ENCODE measurements at regions of chr2 and their contacts with region 1.

Region 1: DNA sequence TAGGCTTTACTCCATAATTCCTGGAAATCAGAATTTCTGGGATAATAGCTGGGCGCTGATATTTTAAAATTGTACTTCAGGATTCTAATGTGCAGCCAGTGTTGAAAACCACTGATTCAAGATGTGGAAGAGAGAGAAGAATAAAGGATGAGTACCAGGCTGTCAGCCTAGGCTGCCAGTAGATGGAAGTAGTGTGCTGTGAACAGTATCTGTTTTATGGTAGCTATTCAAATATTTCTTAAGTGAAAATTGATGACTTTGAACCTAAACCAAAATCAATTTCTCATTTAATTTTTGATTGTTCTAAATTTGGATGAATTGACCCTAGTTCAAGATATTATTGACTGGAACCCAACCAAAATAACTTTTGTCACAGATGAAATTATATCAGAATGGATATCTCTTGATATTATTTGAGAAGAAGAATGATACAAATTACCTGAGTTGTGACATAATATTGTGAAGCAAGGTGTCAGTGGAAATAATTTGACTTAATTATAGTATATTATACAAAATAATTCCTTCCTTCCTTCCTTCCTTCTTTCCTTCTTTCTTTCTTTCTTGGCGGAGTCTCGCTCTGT is 88.1 kb downstream of the COMMD1 start:
- DNase-seq: peak; percentile 55
- ATAC-seq: peak; percentile 76
- H3K4me3 ChIP-seq: no peak overlapping the region
- H3K27ac ChIP-seq: no peak overlapping the region
- H3K4me1 ChIP-seq: peaks cover 26% of the 10 kb centered on the region
- H3K27me3 ChIP-seq: no peaks in the 10 kb centered on the region
- CTCF ChIP-seq: peak; percentile 74 to 87 (median 84)
- EP300 ChIP-seq: no peak
- POLR2A ChIP-seq: no peak
- RAD21 ChIP-seq: peak; percentile 91

Region 2: DNA sequence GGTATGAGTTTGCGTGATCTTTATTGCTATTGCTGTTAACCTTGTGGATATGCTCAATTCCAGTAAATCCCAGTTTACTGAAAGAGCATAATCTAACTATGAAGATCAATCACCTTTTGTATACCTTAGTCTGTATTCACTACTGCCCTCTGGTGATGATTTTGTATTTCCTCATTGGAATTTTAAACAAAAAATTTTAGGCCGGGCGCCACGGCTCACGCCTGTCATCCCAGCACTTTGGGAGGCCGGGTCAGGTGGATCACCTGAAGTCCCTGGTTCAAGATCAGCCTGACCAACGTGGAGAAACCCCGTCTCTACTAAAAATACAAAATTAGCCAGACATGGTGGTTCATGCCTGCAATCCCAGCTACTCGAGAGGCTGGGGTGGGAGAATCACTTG is 82.9 kb before region 1 on chr2:
- CTCF ChIA-PET with region 1: no interaction called
- POLR2A ChIA-PET with region 1: no interaction called
- RAD21 ChIA-PET with region 1: interaction called, 4 read pairs
- SMC1A ChIA-PET with region 1: interaction called, 3 read pairs
- in situ Hi-C with region 1: no loop called
- intact Hi-C with region 1: loop called (anchors 5 kb)
- DNase-seq: no peak
- ATAC-seq: no peak
- H3K4me3 ChIP-seq: no peak overlapping the region
- H3K27ac ChIP-seq: no peak overlapping the region
- H3K4me1 ChIP-seq: no peaks in the 10 kb centered on the region
- H3K27me3 ChIP-seq: no peaks in the 10 kb centered on the region
- CTCF ChIP-seq: peak in 2 of 3 experiments; percentile 12 to 19; a peak in 2 of 6 replicates
- EP300 ChIP-seq: no peak
- POLR2A ChIP-seq: no peak
- RAD21 ChIP-seq: no peak

Region 3: DNA sequence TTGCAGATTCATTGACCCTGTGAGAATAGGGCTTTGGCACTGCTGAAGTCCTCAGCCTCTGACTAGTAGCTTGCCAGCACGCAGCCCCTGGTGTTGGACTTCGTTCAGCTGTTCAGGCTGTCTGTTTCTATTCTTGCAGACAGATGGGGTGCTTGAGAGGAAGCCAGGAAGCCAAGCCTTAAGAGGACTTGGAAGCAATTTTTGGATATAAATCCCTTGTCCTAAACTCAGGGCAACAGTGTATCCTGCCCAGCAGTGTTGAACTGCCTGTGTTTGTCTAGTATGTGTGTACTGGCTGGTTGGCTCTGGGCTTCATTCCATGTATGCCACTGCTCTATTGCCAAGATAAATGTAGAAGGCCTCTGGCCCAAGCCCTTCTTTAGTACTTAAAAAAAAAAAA is 20.6 kb after region 1 on chr2:
- CTCF ChIA-PET with region 1: interaction called, 40 read pairs
- POLR2A ChIA-PET with region 1: no interaction called
- RAD21 ChIA-PET with region 1: interaction called, 16 read pairs
- SMC1A ChIA-PET with region 1: interaction called, 38 read pairs
- in situ Hi-C with region 1: no loop called
- intact Hi-C with region 1: no loop called
- DNase-seq: no peak
- ATAC-seq: peak; percentile 22; the same call in 1 of the 3 replicates
- H3K4me3 ChIP-seq: no peak overlapping the region
- H3K27ac ChIP-seq: no peak overlapping the region
- H3K4me1 ChIP-seq: peaks cover 8% of the 10 kb centered on the region; the same call in 1 of the 2 replicates
- H3K27me3 ChIP-seq: no peaks in the 10 kb centered on the region
- CTCF ChIP-seq: no peak
- EP300 ChIP-seq: no peak
- POLR2A ChIP-seq: no peak
- RAD21 ChIP-seq: no peak

Region 4: DNA sequence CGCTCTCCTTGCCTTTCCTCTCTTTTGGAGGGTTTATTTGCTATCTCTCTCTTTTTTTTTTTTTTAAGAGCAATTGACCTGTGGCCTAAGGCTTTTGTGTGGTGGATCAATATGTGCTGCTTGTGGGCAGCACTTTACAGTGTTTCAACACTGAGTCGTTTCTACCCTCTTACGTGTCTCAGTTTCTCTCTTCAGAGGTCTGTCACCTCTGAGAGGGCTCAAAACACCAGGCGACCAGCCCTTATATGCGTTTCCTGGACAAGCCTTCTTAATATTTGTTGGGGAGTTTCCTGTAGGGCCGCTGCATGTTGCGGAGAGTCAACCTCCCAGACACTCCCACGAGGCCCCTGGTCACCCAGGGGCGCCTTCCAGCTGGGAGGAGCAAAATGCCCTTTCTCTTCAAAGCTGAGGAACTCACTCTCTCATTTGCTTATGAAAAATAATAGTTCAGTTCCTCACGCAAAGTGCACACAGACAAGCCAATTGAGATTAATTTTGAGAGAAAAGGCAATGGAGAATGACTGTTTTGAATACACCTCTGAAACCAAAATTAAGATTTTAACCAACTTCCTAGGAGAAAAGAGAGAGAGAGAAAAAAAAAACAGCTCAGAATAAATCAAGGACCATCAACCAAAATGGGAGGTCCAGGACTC is 106.1 kb after region 1 on chr2:
- CTCF ChIA-PET with region 1: interaction called, 23 read pairs
- POLR2A ChIA-PET with region 1: interaction called, 4 read pairs
- RAD21 ChIA-PET with region 1: interaction called, 38 read pairs
- SMC1A ChIA-PET with region 1: interaction called, 50 read pairs
- in situ Hi-C with region 1: no loop called
- intact Hi-C with region 1: no loop called
- DNase-seq: peak; percentile 80
- ATAC-seq: peak; percentile 96
- H3K4me3 ChIP-seq: peak overlapping the region; percentile 53
- H3K27ac ChIP-seq: peak overlapping the region; percentile 95
- H3K4me1 ChIP-seq: peaks cover 43% of the 10 kb centered on the region
- H3K27me3 ChIP-seq: no peaks in the 10 kb centered on the region
- CTCF ChIP-seq: no peak
- EP300 ChIP-seq: peak; percentile 13 to 16; a peak in 1 of 4 replicates
- POLR2A ChIP-seq: no peak
- RAD21 ChIP-seq: no peak

Region 5: GRCh38 chr2:62195421-62196277 is 202.1 kb after region 1 on chr2 and contains the start of gene B3GNT2:
- CTCF ChIA-PET with region 1: interaction called, 9 read pairs
- POLR2A ChIA-PET with region 1: interaction called, 5 read pairs
- RAD21 ChIA-PET with region 1: interaction called, 63 read pairs
- SMC1A ChIA-PET with region 1: interaction called, 28 read pairs
- in situ Hi-C with region 1: loop called (anchors 10 kb)
- intact Hi-C with region 1: loop called (anchors 2 kb)
- DNase-seq: no peak
- ATAC-seq: peak; percentile 63
- H3K4me3 ChIP-seq: peak within 1 kb of the TSS; percentile 86
- H3K27ac ChIP-seq: peak within 1 kb of the TSS; percentile 87
- H3K4me1 ChIP-seq: peaks cover 9% of the 10 kb centered on the region
- H3K27me3 ChIP-seq: no peaks in the 10 kb centered on the region
- CTCF ChIP-seq: no peak
- EP300 ChIP-seq: no peak
- POLR2A ChIP-seq: peak; percentile 91
- RAD21 ChIP-seq: no peak
- polyA plus RNA-seq, gene B3GNT2: 19.7 to 36.5 TPM

Region 6: GRCh38 chr2:62306751-62307468 is 313.4 kb after region 1 on chr2:
- CTCF ChIA-PET with region 1: interaction called, 25 read pairs
- POLR2A ChIA-PET with region 1: interaction called, 3 read pairs
- RAD21 ChIA-PET with region 1: interaction called, 11 read pairs
- SMC1A ChIA-PET with region 1: interaction called, 8 read pairs
- in situ Hi-C with region 1: no loop called
- intact Hi-C with region 1: loop called (anchors 5 kb)
- DNase-seq: peak; percentile 95
- ATAC-seq: peak; percentile 65
- H3K4me3 ChIP-seq: peak overlapping the region; percentile 38; the same call in 1 of the 2 replicates
- H3K27ac ChIP-seq: peak overlapping the region; percentile 99
- H3K4me1 ChIP-seq: peaks cover 92% of the 10 kb centered on the region
- H3K27me3 ChIP-seq: no peaks in the 10 kb centered on the region
- CTCF ChIP-seq: no peak
- EP300 ChIP-seq: peak; percentile 38 to 45; a peak in 2 of 4 replicates
- POLR2A ChIP-seq: peak; percentile 45; the same call in 1 of the 2 replicates
- RAD21 ChIP-seq: no peak

Region 7: DNA sequence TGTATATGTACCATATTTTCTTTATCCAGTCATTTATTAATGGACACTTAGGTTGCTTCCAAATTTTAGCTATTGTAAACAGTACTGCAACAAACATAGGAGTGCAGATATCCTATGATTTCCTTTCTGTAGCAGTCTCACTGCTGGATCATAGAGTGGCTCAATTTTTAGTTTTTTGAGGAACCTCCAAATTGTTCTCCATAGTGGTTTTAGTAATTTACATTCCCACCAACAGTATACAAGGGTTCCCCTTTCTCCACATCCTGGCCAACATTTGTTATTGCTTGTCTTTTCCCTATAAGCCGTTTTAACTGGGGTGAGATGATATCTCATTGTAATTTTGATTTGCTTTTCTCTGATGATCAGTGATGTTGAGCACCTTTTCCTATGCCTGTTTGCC is 398.2 kb after region 1 on chr2:
- CTCF ChIA-PET with region 1: no interaction called
- POLR2A ChIA-PET with region 1: no interaction called
- RAD21 ChIA-PET with region 1: no interaction called
- SMC1A ChIA-PET with region 1: no interaction called
- in situ Hi-C with region 1: no loop called
- intact Hi-C with region 1: no loop called
- DNase-seq: no peak
- ATAC-seq: no peak
- H3K4me3 ChIP-seq: no peak overlapping the region
- H3K27ac ChIP-seq: no peak overlapping the region
- H3K4me1 ChIP-seq: no peaks in the 10 kb centered on the region
- H3K27me3 ChIP-seq: no peaks in the 10 kb centered on the region
- CTCF ChIP-seq: no peak
- EP300 ChIP-seq: no peak
- POLR2A ChIP-seq: no peak
- RAD21 ChIP-seq: no peak